ENCODE measurements at regions of chr9 and their contacts with region 1.

Region 1: DNA sequence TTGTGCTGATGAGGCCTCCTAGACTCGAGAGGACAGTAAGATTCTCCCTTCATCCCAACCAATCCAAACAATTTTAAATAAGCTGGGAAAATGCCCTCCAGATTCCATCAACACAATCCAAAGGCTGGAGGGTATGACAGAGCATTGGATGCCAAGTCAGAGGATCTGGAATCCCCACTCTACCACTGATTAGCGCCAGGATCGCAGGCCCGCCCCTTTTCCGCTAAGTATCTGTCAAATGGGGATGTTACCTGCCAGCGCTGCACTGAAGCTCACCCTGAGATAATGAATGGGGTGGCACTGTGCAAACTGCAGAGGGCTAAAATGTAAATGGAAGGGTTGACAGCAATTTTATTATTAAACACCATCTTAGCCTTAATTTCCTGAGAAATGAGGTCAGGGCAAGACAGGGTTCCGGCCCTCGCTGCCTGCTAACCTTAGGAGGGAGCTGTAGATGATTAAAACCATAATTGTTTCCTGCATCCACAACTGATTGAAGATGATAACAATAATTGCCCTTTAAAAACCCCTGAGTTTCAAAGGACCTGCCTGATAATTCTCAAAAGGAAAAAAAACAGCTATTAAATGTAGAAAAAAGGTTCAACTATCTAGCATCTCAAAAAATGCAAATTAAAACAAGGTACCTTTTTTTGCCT is 31.6 kb upstream of the GABBR2 start:
- DNase-seq: peak; percentile 69
- H3K4me3 ChIP-seq: no peak overlapping the region
- H3K27ac ChIP-seq: peak overlapping the region in 1 of 2 experiments; percentile 34; a peak in 1 of 4 replicates
- H3K4me1 ChIP-seq: peaks cover 8 to 24% of the 10 kb centered on the region in 2 experiments; a peak in 3 of 4 replicates
- H3K27me3 ChIP-seq: no peaks in the 10 kb centered on the region
- CTCF ChIP-seq: no peak
- EP300 ChIP-seq: peak in 1 of 2 experiments; percentile 42; a peak in 1 of 4 replicates
- RAD21 ChIP-seq: no peak

Region 2: GRCh38 chr9:98472216-98472615 is 268.1 kb before region 1 on chr9:
- CTCF ChIA-PET with region 1: no interaction called
- POLR2A ChIA-PET with region 1: no interaction called
- DNase-seq: no peak
- H3K4me3 ChIP-seq: no peak overlapping the region
- H3K27ac ChIP-seq: no peak overlapping the region
- H3K4me1 ChIP-seq: no peaks in the 10 kb centered on the region
- H3K27me3 ChIP-seq: peaks cover 6% of the 10 kb centered on the region; the same call in 1 of the 2 replicates
- CTCF ChIP-seq: no peak
- EP300 ChIP-seq: no peak
- RAD21 ChIP-seq: no peak

Region 3: DNA sequence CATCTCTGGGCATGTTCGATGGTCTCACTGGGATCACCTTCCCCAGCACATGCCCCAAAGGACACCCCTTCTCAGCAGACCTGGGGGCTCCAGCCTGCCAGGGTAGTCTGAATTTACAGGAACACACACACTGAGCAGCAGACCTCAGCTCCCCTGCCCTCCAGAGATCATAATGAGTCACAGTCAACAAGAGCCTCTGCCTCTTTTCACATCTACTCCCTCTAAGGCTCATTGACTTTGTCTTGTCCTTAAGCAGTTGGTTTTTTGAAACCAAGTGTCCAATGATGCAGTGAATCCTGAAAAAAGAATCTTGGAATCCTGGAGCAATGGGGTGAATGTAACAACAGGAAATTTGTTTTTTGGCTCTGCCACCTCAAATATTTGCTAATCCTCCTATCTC is 52.4 kb before region 1 on chr9:
- CTCF ChIA-PET with region 1: no interaction called
- POLR2A ChIA-PET with region 1: no interaction called
- DNase-seq: no peak
- H3K4me3 ChIP-seq: no peak overlapping the region
- H3K27ac ChIP-seq: no peak overlapping the region
- H3K4me1 ChIP-seq: no peaks in the 10 kb centered on the region
- H3K27me3 ChIP-seq: no peaks in the 10 kb centered on the region; the same call in 1 of the 2 replicates
- CTCF ChIP-seq: no peak
- EP300 ChIP-seq: no peak
- RAD21 ChIP-seq: no peak

Region 4: GRCh38 chr9:98791147-98792095 is 51.1 kb after region 1 on chr9:
- CTCF ChIA-PET with region 1: interaction called, 10 read pairs
- POLR2A ChIA-PET with region 1: no interaction called
- DNase-seq: peak; percentile 86
- H3K4me3 ChIP-seq: no peak overlapping the region; a peak in 1 of 4 replicates
- H3K27ac ChIP-seq: peak overlapping the region in 1 of 2 experiments; percentile 29; a peak in 2 of 4 replicates
- H3K4me1 ChIP-seq: peaks cover 3 to 15% of the 10 kb centered on the region in 2 experiments; a peak in 1 of 4 replicates
- H3K27me3 ChIP-seq: no peaks in the 10 kb centered on the region
- CTCF ChIP-seq: peak; percentile 99
- EP300 ChIP-seq: no peak
- RAD21 ChIP-seq: peak; percentile 67

Measured in SK-N-SH (cell line).